PC-3 (cell line): ENCODE measurements at regions of chr17 and their contacts with region 1.

Region 1: GRCh38 chr17:42804918-42805367 is 6.3 kb downstream of the CNTD1 start:
- DNase-seq: peak; percentile 30
- ATAC-seq: peak; percentile 68
- H3K4me3 ChIP-seq: no peak overlapping the region
- H3K27ac ChIP-seq: peak overlapping the region; percentile 29; the same call in 1 of the 2 replicates
- H3K4me1 ChIP-seq: peaks cover 14% of the 10 kb centered on the region
- H3K27me3 ChIP-seq: no peaks in the 10 kb centered on the region
- CTCF ChIP-seq: no peak

Region 2: GRCh38 chr17:42773290-42774035 is 31.5 kb before region 1 on chr17 and contains the start of gene VPS25:
- CTCF ChIA-PET with region 1: no interaction called
- POLR2A ChIA-PET with region 1: no interaction called
- intact Hi-C with region 1: loop called (anchors 2 kb)
- DNase-seq: peak; percentile 83
- ATAC-seq: peak; percentile 84
- H3K4me3 ChIP-seq: peak within 1 kb of the TSS; percentile 99
- H3K27ac ChIP-seq: peak within 1 kb of the TSS; percentile 81
- H3K4me1 ChIP-seq: peaks cover 14% of the 10 kb centered on the region
- H3K27me3 ChIP-seq: no peaks in the 10 kb centered on the region
- CTCF ChIP-seq: no peak
- total RNA-seq, gene VPS25: 56.7 and 62.0 TPM in 2 replicates

Region 3: GRCh38 chr17:42980398-42981397 is 175.8 kb after region 1 on chr17 and contains the start of gene RUNDC1:
- CTCF ChIA-PET with region 1: no interaction called
- POLR2A ChIA-PET with region 1: no interaction called
- intact Hi-C with region 1: no loop called
- DNase-seq: peak; percentile 83
- ATAC-seq: peak; percentile 80
- H3K4me3 ChIP-seq: peak within 1 kb of the TSS; percentile 99
- H3K27ac ChIP-seq: peak within 1 kb of the TSS; percentile 82
- H3K4me1 ChIP-seq: peaks cover 18% of the 10 kb centered on the region
- H3K27me3 ChIP-seq: no peaks in the 10 kb centered on the region
- CTCF ChIP-seq: no peak
- total RNA-seq, gene RUNDC1: 9.5 and 15.6 TPM in 2 replicates